ENCODE measurements at regions of chr13 and their contacts with region 1.

Region 1: DNA sequence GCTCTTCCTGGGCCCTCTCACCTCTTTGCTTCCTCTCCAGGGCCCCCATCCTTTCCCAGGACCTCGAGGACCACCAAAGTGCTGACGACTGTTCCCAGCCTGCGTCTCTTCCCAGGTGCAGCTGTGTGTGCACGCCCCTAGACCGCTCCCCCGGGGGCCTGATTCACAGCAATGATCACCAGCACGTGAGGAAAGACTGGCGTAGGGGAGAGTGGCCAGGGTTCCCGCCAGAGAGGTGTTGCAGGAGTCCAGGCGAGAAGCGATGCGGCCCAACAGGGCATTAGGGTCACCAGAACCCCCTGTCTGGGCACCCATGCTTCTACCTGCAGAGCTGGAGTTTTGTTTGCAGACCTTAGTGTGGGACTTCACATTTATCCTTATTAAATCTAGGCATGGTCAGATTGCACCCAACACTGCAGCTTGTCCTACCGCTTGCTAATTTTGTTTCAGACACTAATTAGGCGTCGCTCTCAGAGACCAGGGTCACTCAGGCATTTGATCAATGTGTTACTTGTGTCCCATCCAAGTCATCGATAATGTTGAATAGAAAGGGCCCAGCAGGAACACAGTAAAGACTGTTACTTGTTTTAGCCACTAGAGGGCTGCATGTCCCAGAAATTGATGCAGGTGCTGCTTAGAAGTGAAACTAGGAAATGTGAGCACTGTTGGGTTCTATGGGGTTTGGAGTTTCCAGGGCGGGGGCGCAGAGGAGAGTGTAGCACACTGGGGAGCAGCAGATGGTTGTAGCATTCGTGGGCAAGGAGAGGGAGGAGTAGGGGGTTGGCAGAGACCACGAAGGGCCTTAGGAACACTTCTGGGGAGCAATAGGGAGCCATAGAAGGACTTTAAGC is 53.2 kb downstream of the CDADC1 start:
- DNase-seq: peak; percentile 47 to 79 (median 61)
- H3K4me3 ChIP-seq: peak overlapping the region in 1 of 4 donors; percentile 36
- H3K27ac ChIP-seq: no peak overlapping the region
- H3K4me1 ChIP-seq: peaks cover 8 to 17% of the 10 kb centered on the region in 2 donors
- H3K27me3 ChIP-seq: no peaks in the 10 kb centered on the region
- CTCF ChIP-seq: peak; percentile 89 to 97 (median 92)
- POLR2A ChIP-seq: no peak

Region 2: DNA sequence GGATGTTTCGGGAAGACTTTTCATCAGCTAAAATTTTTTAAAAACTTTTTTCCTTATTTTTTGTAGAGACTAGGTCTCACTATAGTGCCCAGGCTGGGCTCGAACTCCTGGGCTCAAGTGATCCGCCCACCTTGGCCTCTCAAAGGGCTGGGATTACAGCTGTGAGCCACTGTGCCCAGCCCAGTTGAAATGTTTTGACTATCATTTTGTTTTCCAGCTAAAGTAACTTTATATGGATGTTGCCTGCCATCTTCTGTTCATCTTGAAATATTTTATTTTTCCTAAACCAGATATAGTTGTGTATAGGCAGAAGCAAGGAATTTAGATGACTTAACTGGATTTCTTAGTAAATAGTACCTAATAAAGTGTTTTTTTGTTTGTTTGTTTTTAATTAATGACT is 135.9 kb after region 1 on chr13:
- intact Hi-C with region 1: loop called (anchors 5 kb)
- DNase-seq: peak; percentile 44 to 74 (median 64)
- H3K4me3 ChIP-seq: no peak overlapping the region
- H3K27ac ChIP-seq: no peak overlapping the region
- H3K4me1 ChIP-seq: no peaks in the 10 kb centered on the region
- H3K27me3 ChIP-seq: no peaks in the 10 kb centered on the region
- CTCF ChIP-seq: peak in 5 of 6 experiments; percentile 49 to 68 (median 61)
- POLR2A ChIP-seq: no peak

Region 3: DNA sequence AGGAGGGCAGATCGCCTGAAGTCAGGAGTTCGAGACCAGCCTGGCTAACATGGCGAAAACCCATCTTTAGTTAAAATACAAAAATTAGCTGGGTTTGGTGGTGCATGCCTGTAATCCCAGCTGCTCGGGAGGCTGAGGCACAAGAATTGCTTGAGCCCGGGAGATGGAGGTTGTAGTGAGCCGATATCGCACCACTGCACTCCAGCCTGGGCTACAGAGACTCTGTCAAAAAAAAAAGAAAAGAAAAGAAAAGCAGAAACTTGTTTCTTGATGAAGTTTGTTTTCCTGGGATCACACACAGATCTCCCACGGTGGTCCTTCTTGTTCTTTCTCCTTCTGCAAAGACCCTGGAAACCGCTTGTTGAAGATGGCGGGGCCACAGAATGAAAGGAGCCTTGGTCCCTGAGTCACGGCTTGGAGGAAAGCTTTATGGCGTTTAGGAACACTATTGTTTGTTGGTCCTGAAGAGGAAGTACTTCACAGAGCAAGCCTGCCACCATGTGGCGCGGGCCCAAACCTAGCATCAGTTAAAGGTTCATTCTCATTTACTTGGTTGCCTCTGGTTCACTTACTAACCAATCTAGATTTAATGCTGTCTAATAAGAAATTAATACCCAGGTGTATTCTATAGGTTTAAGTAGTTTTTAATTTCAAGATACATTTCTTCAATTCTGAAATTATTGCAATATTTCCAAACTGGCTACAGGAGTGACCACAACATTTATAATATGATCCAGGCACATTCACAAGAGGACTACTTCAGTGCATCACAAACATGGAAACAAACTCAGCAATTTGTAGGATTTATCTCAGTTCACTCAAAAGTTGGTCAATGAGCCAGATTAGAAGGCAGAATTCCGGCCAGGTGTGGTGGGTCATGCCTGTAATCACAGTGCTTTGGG is 306.0 kb after region 1 on chr13:
- intact Hi-C with region 1: loop called (anchors 5 kb)
- DNase-seq: peak; percentile 84 to 96 (median 91)
- H3K4me3 ChIP-seq: peak overlapping the region in 2 of 4 donors; percentile 17 to 40
- H3K27ac ChIP-seq: peak overlapping the region in 1 of 5 donors; percentile 31
- H3K4me1 ChIP-seq: peaks cover 3 to 5% of the 10 kb centered on the region in 2 donors
- H3K27me3 ChIP-seq: no peaks in the 10 kb centered on the region
- CTCF ChIP-seq: peak; percentile 68 to 92 (median 84)
- POLR2A ChIP-seq: no peak

Measured in adrenal gland (tissue), 19 donors.